ENCODE measurements at regions of chr6 and their contacts with region 1.

Region 1: GRCh38 chr6:52337633-52338290 is 24.2 kb upstream of the PAQR8 start:
- DNase-seq: no peak
- H3K4me3 ChIP-seq: no peak overlapping the region
- H3K27ac ChIP-seq: no peak overlapping the region
- H3K4me1 ChIP-seq: peaks cover 20% of the 10 kb centered on the region
- CTCF ChIP-seq: no peak

Region 2: GRCh38 chr6:52352239-52353008 is 14.7 kb after region 1 on chr6:
- CTCF ChIA-PET with region 1: no interaction called
- POLR2A ChIA-PET with region 1: interaction called, 11 read pairs
- intact Hi-C with region 1: no loop called
- DNase-seq: no peak
- H3K4me3 ChIP-seq: no peak overlapping the region
- H3K27ac ChIP-seq: no peak overlapping the region
- H3K4me1 ChIP-seq: peaks cover 36% of the 10 kb centered on the region
- CTCF ChIP-seq: no peak

Region 3: DNA sequence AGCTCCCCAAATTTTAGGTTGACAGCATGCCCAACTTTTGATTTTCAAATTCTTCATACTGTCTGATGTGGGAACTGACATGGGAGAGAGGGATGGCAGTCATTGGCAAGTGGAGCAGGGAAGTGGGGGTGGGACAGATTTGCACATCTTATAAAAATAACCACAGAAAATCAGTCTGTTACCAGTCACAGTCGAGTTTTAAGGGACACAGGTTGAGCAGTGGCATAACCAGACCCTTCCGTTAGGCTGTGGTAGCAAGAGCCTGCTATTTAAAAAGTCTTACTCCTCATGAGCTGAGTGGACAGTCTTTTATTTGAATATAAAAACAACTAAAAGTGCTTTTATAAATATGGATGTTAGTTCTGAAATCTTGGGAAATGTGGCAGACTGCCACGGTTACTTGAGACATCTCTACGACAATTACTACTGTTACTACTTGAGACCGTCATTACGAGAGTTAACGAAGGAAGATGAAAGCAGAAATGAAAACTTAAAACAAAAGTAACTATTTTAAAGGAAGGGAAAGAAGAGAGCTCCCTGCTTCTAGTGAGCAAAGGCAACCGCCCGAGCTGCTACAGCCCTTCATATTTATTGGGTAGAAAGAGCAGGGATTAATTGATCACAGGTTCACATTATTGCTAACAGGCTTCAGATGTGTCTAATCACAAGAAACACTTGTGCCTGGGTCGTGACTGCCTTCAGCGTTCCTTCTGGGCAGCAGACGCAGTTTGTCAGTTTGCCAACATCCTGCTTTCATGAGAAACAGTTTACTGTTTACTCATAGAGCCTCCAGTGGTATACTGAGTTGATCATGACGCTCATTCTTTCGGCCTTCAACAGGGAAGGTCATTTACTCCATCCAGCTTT is 153.7 kb after region 1 on chr6:
- CTCF ChIA-PET with region 1: no interaction called
- POLR2A ChIA-PET with region 1: no interaction called
- intact Hi-C with region 1: no loop called
- DNase-seq: no peak
- H3K4me3 ChIP-seq: peak overlapping the region; percentile 12
- H3K27ac ChIP-seq: peak overlapping the region; percentile 27
- H3K4me1 ChIP-seq: peaks cover 68% of the 10 kb centered on the region
- CTCF ChIP-seq: no peak